Activated CD8-positive, alpha-beta T cell treated with anti-CD3 and anti-CD28 coated beads for 36 hours (primary cell): ENCODE measurements at regions of chr10 and their contacts with region 1.

Region 1: DNA sequence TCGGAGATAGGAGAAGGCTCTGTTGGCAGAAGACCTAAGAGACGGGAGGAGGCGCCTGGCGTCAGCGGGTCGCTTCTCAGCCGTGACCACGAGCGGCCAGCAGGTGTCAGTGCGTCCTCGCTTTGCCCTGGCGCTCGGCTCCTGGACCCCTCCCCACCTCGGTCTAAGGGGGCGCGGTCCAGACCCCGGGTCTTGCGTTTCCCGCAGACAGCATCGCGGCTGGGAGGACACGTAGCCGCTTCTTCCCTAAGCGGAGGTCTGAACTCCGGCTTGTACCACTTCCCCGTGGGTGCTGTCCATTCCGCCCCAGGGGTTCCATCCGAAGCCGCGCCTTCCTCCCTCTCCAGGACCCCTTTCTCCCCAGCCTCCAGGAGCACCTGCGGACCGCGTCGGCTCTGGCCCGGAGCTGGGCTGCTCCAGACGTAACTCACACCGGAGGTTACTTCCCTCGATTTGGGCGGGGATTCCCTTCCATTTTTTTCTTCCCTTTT is 593 bp upstream of the ADRA2A start:
- DNase-seq: peak; percentile 69
- ATAC-seq: peak; percentile 76
- H3K4me3 Mint-ChIP-seq: peak overlapping the region; percentile 64
- H3K27ac Mint-ChIP-seq: no peak overlapping the region
- H3K4me1 Mint-ChIP-seq: peaks cover 4% of the 10 kb centered on the region
- H3K27me3 Mint-ChIP-seq: peaks cover 61% of the 10 kb centered on the region
- CTCF ChIP-seq: peak; percentile 87

Region 2: DNA sequence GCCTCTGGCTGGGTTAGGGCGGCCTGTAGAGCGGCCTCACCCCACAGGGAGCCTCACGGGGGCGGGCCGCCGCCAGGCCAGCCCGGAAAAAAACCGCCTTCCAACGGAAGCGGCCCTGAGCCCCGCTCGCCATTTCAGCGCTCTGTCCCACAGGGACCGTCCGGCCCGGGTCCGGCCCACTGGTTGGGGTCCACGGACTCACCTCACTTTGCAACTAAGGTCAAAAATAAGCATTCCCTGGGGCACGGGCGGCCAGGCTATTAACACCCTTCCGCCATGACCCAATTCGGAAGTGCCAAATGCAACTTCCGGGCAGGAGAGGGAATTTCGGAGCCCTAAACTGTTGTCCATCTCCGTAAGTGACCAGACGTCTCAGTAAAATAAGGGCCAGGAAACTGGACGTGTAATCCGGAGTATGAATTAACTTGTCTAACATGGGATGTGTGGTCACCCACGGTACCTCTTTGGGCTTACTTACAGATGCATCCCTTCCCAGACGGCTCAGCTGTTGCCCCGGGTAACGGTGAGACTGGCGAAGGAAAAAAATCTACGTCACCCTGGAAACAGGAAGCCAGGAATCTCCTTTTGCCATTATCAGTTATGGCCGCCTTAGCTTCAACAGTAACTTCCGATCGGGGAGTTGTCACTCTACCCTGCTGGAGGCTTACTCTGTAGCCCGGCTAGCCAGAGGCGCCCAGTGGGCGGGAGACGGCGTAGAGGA is 157.4 kb before region 1 on chr10 and contains the start of gene BBIP1:
- CTCF ChIA-PET with region 1: interaction called, 4 read pairs
- POLR2A ChIA-PET with region 1: no interaction called
- intact Hi-C with region 1: loop called (anchors 10 kb)
- DNase-seq: no peak
- ATAC-seq: peak; percentile 94
- H3K4me3 Mint-ChIP-seq: peak within 1 kb of the TSS; percentile 87
- H3K27ac Mint-ChIP-seq: peak within 1 kb of the TSS; percentile 98
- H3K4me1 Mint-ChIP-seq: peaks cover 39% of the 10 kb centered on the region
- H3K27me3 Mint-ChIP-seq: no peaks in the 10 kb centered on the region
- CTCF ChIP-seq: no peak
- total RNA-seq, gene BBIP1: 41.2 to 44.4 TPM

Region 3: GRCh38 chr10:111063471-111063870 is 12.8 kb before region 1 on chr10:
- CTCF ChIA-PET with region 1: interaction called, 14 read pairs
- POLR2A ChIA-PET with region 1: no interaction called
- intact Hi-C with region 1: no loop called
- DNase-seq: no peak
- ATAC-seq: no peak
- H3K4me3 Mint-ChIP-seq: no peak overlapping the region
- H3K27ac Mint-ChIP-seq: no peak overlapping the region
- H3K4me1 Mint-ChIP-seq: no peaks in the 10 kb centered on the region
- H3K27me3 Mint-ChIP-seq: peaks cover 35% of the 10 kb centered on the region
- CTCF ChIP-seq: no peak

Region 4: DNA sequence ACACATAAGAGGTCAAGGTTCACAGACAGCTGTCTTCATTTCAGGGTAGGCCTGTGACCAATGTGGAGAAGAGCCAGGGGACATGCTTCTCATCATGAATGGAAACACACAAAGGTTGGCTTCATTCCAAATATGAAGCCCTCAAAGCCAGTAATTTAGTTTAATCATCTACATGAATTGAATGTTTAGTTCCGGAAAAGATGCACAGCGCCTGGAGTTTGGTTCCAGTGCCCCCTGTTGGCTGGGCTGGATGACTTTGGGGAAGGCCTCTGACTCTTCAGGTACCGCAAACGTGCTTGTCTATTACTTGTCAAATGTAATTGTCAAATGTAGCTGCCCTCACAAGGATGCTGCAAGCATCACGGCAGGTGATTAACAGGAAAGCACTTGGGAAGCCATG is 131.3 kb after region 1 on chr10:
- CTCF ChIA-PET with region 1: interaction called, 15 read pairs
- POLR2A ChIA-PET with region 1: no interaction called
- intact Hi-C with region 1: loop called (anchors 10 kb)
- DNase-seq: peak; percentile 53
- ATAC-seq: no peak
- H3K4me3 Mint-ChIP-seq: no peak overlapping the region
- H3K27ac Mint-ChIP-seq: no peak overlapping the region
- H3K4me1 Mint-ChIP-seq: no peaks in the 10 kb centered on the region
- H3K27me3 Mint-ChIP-seq: no peaks in the 10 kb centered on the region
- CTCF ChIP-seq: peak; percentile 26

Region 5: GRCh38 chr10:111598436-111599059 is 522.3 kb after region 1 on chr10:
- CTCF ChIA-PET with region 1: interaction called, 31 read pairs
- POLR2A ChIA-PET with region 1: no interaction called
- intact Hi-C with region 1: loop called (anchors 5 kb)
- DNase-seq: peak; percentile 58
- ATAC-seq: peak; percentile 53
- H3K4me3 Mint-ChIP-seq: no peak overlapping the region
- H3K27ac Mint-ChIP-seq: no peak overlapping the region
- H3K4me1 Mint-ChIP-seq: no peaks in the 10 kb centered on the region
- H3K27me3 Mint-ChIP-seq: peaks cover 3% of the 10 kb centered on the region
- CTCF ChIP-seq: peak; percentile 79